ENCODE measurements at regions of chr21 and their contacts with region 1.

Region 1: GRCh38 chr21:31659536-31660258 is at the start of gene SOD1:
- DNase-seq: peak; percentile 99
- H3K4me3 ChIP-seq: peak within 1 kb of the TSS; percentile 89 to 96 (median 91)
- H3K27ac ChIP-seq: peak within 1 kb of the TSS; percentile 90 to 97 (median 95)
- H3K4me1 ChIP-seq: peaks cover 24 to 48% (median 46%) of the 10 kb centered on the region in 4 donors
- H3K27me3 ChIP-seq: no peaks in the 10 kb centered on the region
- CTCF ChIP-seq: peak in 2 of 3 experiments; percentile 14 to 16
- EP300 ChIP-seq: no peak
- POLR2A ChIP-seq: peak; percentile 79
- total RNA-seq, gene SOD1: 185 to 258 (median 222) TPM

Region 2: GRCh38 chr21:31721381-31721780 is 61.7 kb after region 1 on chr21:
- intact Hi-C with region 1: no loop called
- DNase-seq: no peak
- H3K4me3 ChIP-seq: no peak overlapping the region
- H3K27ac ChIP-seq: no peak overlapping the region
- H3K4me1 ChIP-seq: peaks cover 12 to 54% (median 51%) of the 10 kb centered on the region in 4 donors
- H3K27me3 ChIP-seq: no peaks in the 10 kb centered on the region
- CTCF ChIP-seq: no peak
- EP300 ChIP-seq: no peak
- POLR2A ChIP-seq: no peak

Region 3: DNA sequence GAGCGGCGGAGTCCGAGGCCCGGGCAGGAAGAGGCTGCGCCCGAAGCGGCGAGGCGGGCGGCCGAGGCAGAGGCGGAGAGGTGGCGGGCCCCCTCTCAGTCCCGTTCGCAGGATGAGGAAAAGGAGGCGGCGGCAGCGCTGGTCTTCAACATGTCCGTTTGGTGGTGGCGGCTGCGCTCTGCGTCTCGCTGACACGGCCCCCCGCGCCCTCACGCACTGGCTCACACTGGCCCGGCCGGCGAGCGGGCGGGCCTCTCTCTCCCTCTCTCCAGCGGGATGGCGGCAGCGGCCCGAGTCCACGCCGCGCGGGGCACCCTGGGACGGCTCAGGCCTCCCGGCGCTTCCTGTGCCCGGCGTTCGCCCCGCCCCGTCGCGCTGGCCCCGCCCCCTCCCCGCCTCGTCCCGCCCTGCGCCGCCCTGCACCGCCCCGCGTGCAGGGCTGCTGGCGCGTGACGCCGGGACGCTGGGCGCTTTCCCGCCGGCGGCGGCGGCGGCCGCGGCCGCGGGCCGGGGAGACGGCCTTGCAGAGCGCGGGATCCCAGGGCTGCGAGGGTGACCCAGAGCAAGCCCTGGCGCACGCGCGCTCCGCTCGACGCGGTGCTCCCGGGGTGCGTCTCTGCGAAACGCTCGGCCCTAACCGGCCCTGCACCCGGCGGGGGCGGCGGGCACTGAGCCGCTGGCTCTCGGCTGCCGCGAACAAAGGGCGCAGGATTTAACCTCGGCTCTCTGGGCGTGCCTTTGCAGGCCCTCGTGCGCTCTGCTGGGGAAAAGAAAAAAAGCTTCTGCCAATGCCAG is 72.3 kb after region 1 on chr21 and contains the start of gene SCAF4:
- intact Hi-C with region 1: loop called (anchors 2 kb)
- DNase-seq: peak; percentile 95
- H3K4me3 ChIP-seq: peak within 1 kb of the TSS; percentile 70 to 99 (median 93)
- H3K27ac ChIP-seq: peak within 1 kb of the TSS; percentile 90 to 99 (median 97)
- H3K4me1 ChIP-seq: peaks cover 31 to 55% (median 50%) of the 10 kb centered on the region in 4 donors
- H3K27me3 ChIP-seq: no peaks in the 10 kb centered on the region
- CTCF ChIP-seq: no peak
- EP300 ChIP-seq: no peak
- POLR2A ChIP-seq: peak; percentile 70
- total RNA-seq, gene SCAF4: 12.1 to 18.8 (median 15.2) TPM

Region 4: GRCh38 chr21:31750843-31751242 is 91.1 kb after region 1 on chr21:
- intact Hi-C with region 1: no loop called
- DNase-seq: no peak
- H3K4me3 ChIP-seq: no peak overlapping the region
- H3K27ac ChIP-seq: no peak overlapping the region
- H3K4me1 ChIP-seq: no peaks in the 10 kb centered on the region
- H3K27me3 ChIP-seq: no peaks in the 10 kb centered on the region
- CTCF ChIP-seq: no peak
- EP300 ChIP-seq: no peak
- POLR2A ChIP-seq: no peak

Region 5: GRCh38 chr21:31846690-31847089 is 187.0 kb after region 1 on chr21:
- intact Hi-C with region 1: no loop called
- DNase-seq: peak; percentile 24
- H3K4me3 ChIP-seq: no peak overlapping the region
- H3K27ac ChIP-seq: no peak overlapping the region
- H3K4me1 ChIP-seq: peaks cover 0 to 14% (median 8%) of the 10 kb centered on the region in 4 donors
- H3K27me3 ChIP-seq: peaks cover 0 to 15% (median 0%) of the 10 kb centered on the region in 4 donors
- CTCF ChIP-seq: no peak
- EP300 ChIP-seq: no peak
- POLR2A ChIP-seq: no peak

Region 6: GRCh38 chr21:32278518-32279376 is 619.0 kb after region 1 on chr21 and contains the start of gene MIS18A:
- intact Hi-C with region 1: loop called (anchors 10 kb)
- DNase-seq: peak; percentile 98
- H3K4me3 ChIP-seq: peak within 1 kb of the TSS; percentile 75 to 84 (median 82)
- H3K27ac ChIP-seq: peak within 1 kb of the TSS; percentile 56 to 77 (median 68)
- H3K4me1 ChIP-seq: peaks cover 16 to 24% (median 22%) of the 10 kb centered on the region in 4 donors
- H3K27me3 ChIP-seq: no peaks in the 10 kb centered on the region
- CTCF ChIP-seq: peak in 1 of 3 experiments; percentile 53
- EP300 ChIP-seq: no peak
- POLR2A ChIP-seq: no peak
- total RNA-seq, gene MIS18A: 3.0 to 4.6 (median 3.2) TPM